ENCODE measurements at regions of chr13 and their contacts with region 1.

Region 1: GRCh38 chr13:77599351-77599750 is 63.8 kb downstream of the SCEL start:
- DNase-seq: no peak
- ATAC-seq: no peak

Region 2: GRCh38 chr13:77267362-77267761 is 332.0 kb before region 1 on chr13:
- intact Hi-C with region 1: no loop called
- DNase-seq: no peak
- ATAC-seq: no peak

Region 3: GRCh38 chr13:77751513-77752456 is 152.4 kb after region 1 on chr13:
- intact Hi-C with region 1: loop called in 1 of 2 experiments (anchors 5 kb)
- DNase-seq: no peak
- ATAC-seq: peak; percentile 46

Measured in left colon (tissue), 2 donors.